Body of pancreas (tissue), 4 donors: ENCODE measurements at regions of chr9 and their contacts with region 1.

Region 1: GRCh38 chr9:33466565-33467495 is 6.9 kb downstream of the NOL6 start:
- DNase-seq: peak; percentile 67 to 78 (median 76)
- ATAC-seq: peak; percentile 81
- H3K4me3 ChIP-seq: no peak overlapping the region
- H3K27ac ChIP-seq: no peak overlapping the region
- H3K4me1 ChIP-seq: peaks cover 4% of the 10 kb centered on the region
- H3K27me3 ChIP-seq: no peaks in the 10 kb centered on the region
- CTCF ChIP-seq: peak; percentile 83 to 93 (median 92)
- POLR2A ChIP-seq: no peak

Region 2: DNA sequence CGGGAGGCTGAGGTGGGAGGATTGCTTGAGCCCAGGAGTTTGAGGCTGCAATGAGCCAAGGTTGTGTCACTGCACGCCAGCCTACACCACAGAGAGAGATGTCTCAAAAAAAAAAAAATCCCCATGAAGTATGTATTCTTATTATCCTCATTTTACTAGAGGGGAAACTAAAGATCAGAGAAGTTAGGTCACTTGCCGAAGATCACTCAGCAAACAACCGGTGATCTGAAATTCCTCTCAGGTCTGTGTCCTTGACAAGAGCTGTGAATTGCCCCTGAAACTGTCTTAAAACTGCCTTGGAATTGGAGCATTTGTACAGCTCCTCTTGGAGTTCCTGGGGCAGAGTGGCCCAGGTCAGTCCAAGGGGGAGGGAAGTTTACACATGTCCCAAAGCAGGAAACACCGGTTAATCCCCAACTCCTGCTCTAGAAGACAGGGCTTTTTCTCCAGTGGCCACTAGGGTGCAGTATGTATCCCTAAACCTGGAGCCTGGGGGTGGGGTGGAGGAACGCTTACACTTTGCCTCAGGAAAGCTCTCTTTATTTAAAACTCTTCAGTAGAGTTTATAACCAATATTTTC is 92.1 kb before region 1 on chr9:
- intact Hi-C with region 1: loop called (anchors 10 kb)
- DNase-seq: peak; percentile 80 to 86 (median 82)
- ATAC-seq: peak; percentile 93
- H3K4me3 ChIP-seq: no peak overlapping the region
- H3K27ac ChIP-seq: peak overlapping the region in 1 of 4 donors; percentile 26
- H3K4me1 ChIP-seq: peaks cover 6% of the 10 kb centered on the region
- H3K27me3 ChIP-seq: no peaks in the 10 kb centered on the region
- CTCF ChIP-seq: peak; percentile 71 to 87 (median 83)
- POLR2A ChIP-seq: no peak

Region 3: GRCh38 chr9:33404788-33405362 is 62.0 kb before region 1 on chr9:
- intact Hi-C with region 1: loop called (anchors 5 kb)
- DNase-seq: no peak
- ATAC-seq: no peak
- H3K4me3 ChIP-seq: no peak overlapping the region
- H3K27ac ChIP-seq: no peak overlapping the region
- H3K4me1 ChIP-seq: peaks cover 6% of the 10 kb centered on the region
- H3K27me3 ChIP-seq: no peaks in the 10 kb centered on the region
- CTCF ChIP-seq: no peak
- POLR2A ChIP-seq: no peak